OCI-LY7 (cell line): ENCODE measurements at regions of chr19 and their contacts with region 1.

Region 1: GRCh38 chr19:13262450-13262849 is 112.2 kb downstream of the IER2 start:
- DNase-seq: peak; percentile 69
- H3K4me3 ChIP-seq: no peak overlapping the region
- H3K27ac ChIP-seq: no peak overlapping the region
- H3K4me1 ChIP-seq: peaks cover 13% of the 10 kb centered on the region
- CTCF ChIP-seq: peak; percentile 81

Region 2: DNA sequence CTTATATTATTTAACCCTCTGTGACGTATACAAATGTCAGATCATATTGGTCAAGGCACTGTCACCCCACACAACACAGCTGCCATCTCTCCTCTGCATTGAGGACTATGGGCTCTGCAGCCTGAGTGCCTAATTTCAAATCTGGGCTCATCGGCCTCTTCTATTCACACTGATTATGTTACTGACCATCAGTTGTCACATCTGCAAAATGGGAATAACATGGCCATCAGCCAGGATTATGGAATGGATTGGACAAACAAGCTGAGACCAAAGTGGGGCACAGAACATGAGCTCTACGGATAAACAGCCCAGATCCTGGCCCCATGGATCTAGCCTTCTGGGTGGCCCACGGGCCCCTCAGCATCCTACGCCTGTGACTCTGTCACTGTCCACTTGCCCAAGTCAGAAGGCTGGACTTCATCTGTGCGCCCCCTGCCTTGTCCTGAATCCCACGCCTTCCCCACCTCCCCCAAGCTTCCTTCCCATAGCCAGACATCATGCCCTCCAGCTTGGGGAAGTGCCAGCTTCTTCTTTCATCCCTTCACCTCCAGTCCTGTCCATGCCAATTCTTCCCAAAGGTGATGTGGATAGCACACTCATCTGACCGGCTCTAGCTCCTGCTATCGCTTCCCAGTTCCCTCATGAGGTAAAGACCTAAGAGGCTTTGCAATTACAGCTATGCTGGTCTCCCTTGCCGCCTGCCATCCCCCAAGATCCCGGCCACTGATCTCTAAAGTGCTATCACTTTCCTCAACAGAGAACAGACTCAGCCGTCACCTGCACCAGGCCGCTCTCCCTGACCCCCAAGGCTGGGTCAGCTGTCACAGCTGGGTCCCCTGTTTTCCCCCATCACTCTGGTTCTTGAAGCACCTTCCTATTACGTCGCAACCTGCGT is 329.8 kb before region 1 on chr19:
- CTCF ChIA-PET with region 1: interaction called, 15 read pairs
- POLR2A ChIA-PET with region 1: no interaction called
- intact Hi-C with region 1: no loop called
- DNase-seq: no peak
- H3K4me3 ChIP-seq: peak overlapping the region; percentile 91
- H3K27ac ChIP-seq: peak overlapping the region; percentile 42
- H3K4me1 ChIP-seq: peaks cover 41% of the 10 kb centered on the region
- CTCF ChIP-seq: no peak

Region 3: GRCh38 chr19:12974301-12975220 is 287.9 kb before region 1 on chr19:
- CTCF ChIA-PET with region 1: no interaction called
- POLR2A ChIA-PET with region 1: no interaction called
- intact Hi-C with region 1: loop called (anchors 5 kb)
- DNase-seq: no peak
- H3K4me3 ChIP-seq: no peak overlapping the region
- H3K27ac ChIP-seq: no peak overlapping the region
- H3K4me1 ChIP-seq: no peaks in the 10 kb centered on the region
- CTCF ChIP-seq: no peak

Region 4: GRCh38 chr19:13195678-13196077 is 66.8 kb before region 1 on chr19:
- CTCF ChIA-PET with region 1: interaction called, 6 read pairs
- POLR2A ChIA-PET with region 1: interaction called, 6 read pairs
- intact Hi-C with region 1: loop called (anchors 1 kb)
- DNase-seq: peak; percentile 84
- H3K4me3 ChIP-seq: no peak overlapping the region
- H3K27ac ChIP-seq: no peak overlapping the region
- H3K4me1 ChIP-seq: peaks cover 16% of the 10 kb centered on the region
- CTCF ChIP-seq: peak; percentile 96

Region 5: GRCh38 chr19:13220847-13221246 is 41.6 kb before region 1 on chr19:
- CTCF ChIA-PET with region 1: interaction called, 15 read pairs
- POLR2A ChIA-PET with region 1: no interaction called
- intact Hi-C with region 1: no loop called
- DNase-seq: no peak
- H3K4me3 ChIP-seq: no peak overlapping the region
- H3K27ac ChIP-seq: no peak overlapping the region
- H3K4me1 ChIP-seq: no peaks in the 10 kb centered on the region
- CTCF ChIP-seq: no peak